ENCODE measurements at regions of chr6 and their contacts with region 1.

Region 1: GRCh38 chr6:108492131-108492766 is 68.5 kb upstream of the FOXO3 start:
- DNase-seq: peak; percentile 59
- H3K4me3 Mint-ChIP-seq: no peak overlapping the region
- H3K27ac Mint-ChIP-seq: no peak overlapping the region
- H3K4me1 Mint-ChIP-seq: no peaks in the 10 kb centered on the region
- H3K27me3 Mint-ChIP-seq: no peaks in the 10 kb centered on the region
- CTCF ChIP-seq: peak; percentile 57

Region 2: GRCh38 chr6:108113557-108114519 is 378.4 kb before region 1 on chr6:
- CTCF ChIA-PET with region 1: interaction called, 43 read pairs
- POLR2A ChIA-PET with region 1: no interaction called
- intact Hi-C with region 1: loop called (anchors 1 kb)
- DNase-seq: peak; percentile 67
- H3K4me3 Mint-ChIP-seq: peak overlapping the region; percentile 73
- H3K27ac Mint-ChIP-seq: no peak overlapping the region
- H3K4me1 Mint-ChIP-seq: peaks cover 21% of the 10 kb centered on the region
- H3K27me3 Mint-ChIP-seq: peaks cover 11% of the 10 kb centered on the region
- CTCF ChIP-seq: peak; percentile 52

Region 3: GRCh38 chr6:108260809-108261569 is 231.3 kb before region 1 on chr6 and contains the start of gene SNX3:
- CTCF ChIA-PET with region 1: interaction called, 6 read pairs
- POLR2A ChIA-PET with region 1: interaction called, 8 read pairs
- intact Hi-C with region 1: loop called (anchors 1 kb)
- DNase-seq: peak; percentile 96
- H3K4me3 Mint-ChIP-seq: peak within 1 kb of the TSS; percentile 93
- H3K27ac Mint-ChIP-seq: peak within 1 kb of the TSS; percentile 89
- H3K4me1 Mint-ChIP-seq: peaks cover 7% of the 10 kb centered on the region
- H3K27me3 Mint-ChIP-seq: no peaks in the 10 kb centered on the region
- CTCF ChIP-seq: no peak
- total RNA-seq, gene SNX3: 114 and 138 TPM in 2 replicates

Region 4: GRCh38 chr6:108476847-108477430 is 15.3 kb before region 1 on chr6:
- CTCF ChIA-PET with region 1: interaction called, 19 read pairs
- POLR2A ChIA-PET with region 1: no interaction called
- intact Hi-C with region 1: no loop called
- DNase-seq: no peak
- H3K4me3 Mint-ChIP-seq: no peak overlapping the region
- H3K27ac Mint-ChIP-seq: no peak overlapping the region
- H3K4me1 Mint-ChIP-seq: no peaks in the 10 kb centered on the region
- H3K27me3 Mint-ChIP-seq: no peaks in the 10 kb centered on the region
- CTCF ChIP-seq: no peak

Region 5: DNA sequence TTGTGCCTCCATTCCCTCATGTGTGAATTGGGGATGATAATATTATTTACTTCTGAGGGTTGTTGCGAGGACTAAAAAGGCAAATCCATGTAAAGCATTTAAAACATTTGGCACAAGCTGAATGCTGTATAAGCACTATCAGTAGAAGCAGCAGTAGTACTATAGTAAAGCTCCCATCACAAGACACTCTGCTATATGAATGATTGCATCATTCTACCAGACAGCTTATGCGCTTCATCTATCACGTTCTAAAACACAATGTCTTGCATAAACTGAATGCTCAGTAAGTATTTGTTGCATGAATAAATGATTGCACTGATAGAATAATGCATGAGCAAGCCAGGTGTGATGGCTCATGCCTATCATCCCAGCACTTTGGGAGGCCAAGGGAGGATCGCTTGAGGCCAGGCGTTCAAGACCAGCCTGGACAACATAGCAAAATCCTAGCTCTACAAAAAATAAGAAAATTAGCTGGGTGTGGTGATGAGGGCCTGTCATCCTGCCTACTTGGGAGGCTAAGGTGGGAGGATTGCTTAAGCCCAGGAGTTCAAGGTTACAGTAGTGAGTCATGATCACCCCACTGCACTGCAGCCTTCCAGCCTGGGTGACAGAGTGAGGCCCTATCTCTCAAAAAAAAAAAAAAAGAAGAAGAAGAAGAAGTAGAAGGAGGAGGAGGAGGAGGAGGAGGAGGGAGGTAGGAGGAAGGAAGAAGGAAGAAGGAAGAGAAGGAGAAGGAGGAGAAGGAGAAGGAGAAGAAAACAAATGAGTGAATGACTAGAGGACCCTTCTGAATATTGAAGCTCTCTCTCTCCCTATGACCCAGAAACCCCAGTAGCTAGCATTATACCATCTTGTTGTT is 18.4 kb after region 1 on chr6:
- CTCF ChIA-PET with region 1: interaction called, 12 read pairs
- POLR2A ChIA-PET with region 1: interaction called, 3 read pairs
- intact Hi-C with region 1: no loop called
- DNase-seq: no peak
- H3K4me3 Mint-ChIP-seq: no peak overlapping the region
- H3K27ac Mint-ChIP-seq: no peak overlapping the region
- H3K4me1 Mint-ChIP-seq: no peaks in the 10 kb centered on the region
- H3K27me3 Mint-ChIP-seq: no peaks in the 10 kb centered on the region
- CTCF ChIP-seq: no peak

Region 6: DNA sequence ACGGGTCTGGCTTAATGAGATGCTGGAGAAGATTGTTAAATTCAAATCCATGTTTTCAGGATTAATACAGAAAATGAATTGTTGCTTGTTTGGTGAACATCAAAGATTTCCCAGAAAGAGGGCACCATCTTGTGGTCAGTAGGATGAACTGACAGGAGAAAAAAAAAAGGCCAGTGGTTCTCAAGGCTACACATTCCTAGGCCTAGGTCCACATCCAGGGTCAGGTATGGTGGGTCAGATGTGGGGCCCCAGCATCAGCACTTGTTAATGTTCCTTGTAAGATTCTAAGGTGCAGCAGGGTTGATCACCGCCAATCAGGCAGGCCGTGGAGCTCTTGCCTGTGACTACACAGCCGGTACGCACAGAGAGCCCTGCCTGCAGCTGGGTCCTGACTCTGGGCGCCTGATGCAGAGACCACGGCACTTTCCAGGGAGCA is 34.5 kb after region 1 on chr6:
- CTCF ChIA-PET with region 1: interaction called, 20 read pairs
- POLR2A ChIA-PET with region 1: interaction called, 4 read pairs
- intact Hi-C with region 1: no loop called
- DNase-seq: peak; percentile 50
- H3K4me3 Mint-ChIP-seq: no peak overlapping the region
- H3K27ac Mint-ChIP-seq: no peak overlapping the region
- H3K4me1 Mint-ChIP-seq: no peaks in the 10 kb centered on the region
- H3K27me3 Mint-ChIP-seq: no peaks in the 10 kb centered on the region
- CTCF ChIP-seq: peak; percentile 71

Region 7: GRCh38 chr6:108760126-108761050 is 268.1 kb after region 1 on chr6:
- CTCF ChIA-PET with region 1: no interaction called
- POLR2A ChIA-PET with region 1: no interaction called
- intact Hi-C with region 1: no loop called
- DNase-seq: no peak
- H3K4me3 Mint-ChIP-seq: no peak overlapping the region
- H3K27ac Mint-ChIP-seq: no peak overlapping the region
- H3K4me1 Mint-ChIP-seq: peaks cover 6% of the 10 kb centered on the region
- H3K27me3 Mint-ChIP-seq: no peaks in the 10 kb centered on the region
- CTCF ChIP-seq: no peak

Measured in MCF 10A (cell line).